CD4-positive, alpha-beta T cell (primary cell): ENCODE measurements at regions of chr7 and their contacts with region 1.

Region 1: GRCh38 chr7:102390697-102391484 is 5.3 kb upstream of the PRKRIP1 start:
- DNase-seq: peak; percentile 55 to 82 (median 60)
- ATAC-seq: peak; percentile 64
- H3K4me3 ChIP-seq: no peak overlapping the region
- H3K4me3 Mint-ChIP-seq: no peak overlapping the region
- H3K27ac ChIP-seq: no peak overlapping the region
- H3K27ac Mint-ChIP-seq: no peak overlapping the region
- H3K4me1 ChIP-seq: peaks cover 10% of the 10 kb centered on the region
- H3K4me1 Mint-ChIP-seq: peaks cover 6% of the 10 kb centered on the region
- H3K27me3 ChIP-seq: no peaks in the 10 kb centered on the region
- H3K27me3 Mint-ChIP-seq: no peaks in the 10 kb centered on the region
- CTCF ChIP-seq: peak; percentile 86

Region 2: DNA sequence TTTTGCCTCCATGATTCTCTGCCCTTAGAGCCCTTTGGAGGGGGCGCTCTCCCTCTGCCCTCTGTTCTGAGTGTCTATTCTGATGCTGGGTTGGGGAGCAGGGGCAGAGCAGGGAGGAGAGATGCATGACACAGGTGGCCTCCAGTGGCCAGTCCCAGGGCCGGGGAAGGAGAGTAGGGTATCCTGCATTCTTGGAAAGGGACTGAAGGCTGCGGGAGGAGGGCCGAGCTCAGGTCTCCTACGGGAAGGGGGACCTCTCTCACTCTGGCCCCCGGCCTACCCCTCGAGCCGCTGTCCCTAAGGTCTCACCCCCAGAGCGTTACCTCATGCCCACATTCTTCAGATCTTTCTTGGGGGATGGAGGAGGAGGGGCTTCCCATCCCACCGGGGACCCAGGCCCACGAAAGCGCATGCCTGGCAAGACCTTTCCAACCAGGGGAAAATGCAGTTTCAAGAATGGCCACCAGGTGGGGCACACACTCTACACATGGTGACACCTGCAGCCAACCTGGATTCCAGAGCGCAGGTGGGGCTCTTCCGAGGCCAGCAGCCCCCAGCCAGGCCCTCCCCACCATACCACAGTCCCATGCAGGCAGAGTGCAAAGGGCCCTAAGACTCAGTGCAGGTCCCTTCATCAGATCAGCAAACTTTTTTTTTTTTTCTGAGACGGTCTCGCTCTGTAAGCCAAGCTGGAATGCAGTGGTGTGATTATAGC is 848.2 kb before region 1 on chr7:
- CTCF ChIA-PET with region 1: no interaction called
- POLR2A ChIA-PET with region 1: no interaction called
- intact Hi-C with region 1: loop called (anchors 2 to 5 kb)
- DNase-seq: peak; percentile 61 to 81 (median 72)
- ATAC-seq: peak; percentile 49
- H3K4me3 ChIP-seq: no peak overlapping the region
- H3K4me3 Mint-ChIP-seq: no peak overlapping the region
- H3K27ac ChIP-seq: no peak overlapping the region
- H3K27ac Mint-ChIP-seq: no peak overlapping the region
- H3K4me1 ChIP-seq: peaks cover 4% of the 10 kb centered on the region
- H3K4me1 Mint-ChIP-seq: no peaks in the 10 kb centered on the region
- H3K27me3 ChIP-seq: peaks cover 0 to 3% of the 10 kb centered on the region in 2 experiments
- H3K27me3 Mint-ChIP-seq: peaks cover 4% of the 10 kb centered on the region
- CTCF ChIP-seq: peak; percentile 88

Region 3: GRCh38 chr7:102279537-102280400 is 111.1 kb before region 1 on chr7:
- CTCF ChIA-PET with region 1: interaction called, 5 read pairs
- POLR2A ChIA-PET with region 1: no interaction called
- intact Hi-C with region 1: loop called (anchors 1 kb)
- DNase-seq: peak in 13 of 14 experiments; percentile 37 to 82 (median 51)
- ATAC-seq: peak; percentile 89
- H3K4me3 ChIP-seq: no peak overlapping the region
- H3K4me3 Mint-ChIP-seq: no peak overlapping the region
- H3K27ac ChIP-seq: no peak overlapping the region
- H3K27ac Mint-ChIP-seq: no peak overlapping the region
- H3K4me1 ChIP-seq: peaks cover 14% of the 10 kb centered on the region
- H3K4me1 Mint-ChIP-seq: peaks cover 6% of the 10 kb centered on the region
- H3K27me3 ChIP-seq: no peaks in the 10 kb centered on the region
- H3K27me3 Mint-ChIP-seq: no peaks in the 10 kb centered on the region
- CTCF ChIP-seq: peak; percentile 81

Region 4: GRCh38 chr7:103094102-103094501 is 703.2 kb after region 1 on chr7:
- CTCF ChIA-PET with region 1: no interaction called
- POLR2A ChIA-PET with region 1: no interaction called
- intact Hi-C with region 1: no loop called
- DNase-seq: no peak
- ATAC-seq: no peak
- H3K4me3 ChIP-seq: no peak overlapping the region
- H3K4me3 Mint-ChIP-seq: no peak overlapping the region
- H3K27ac ChIP-seq: no peak overlapping the region
- H3K27ac Mint-ChIP-seq: no peak overlapping the region
- H3K4me1 ChIP-seq: no peaks in the 10 kb centered on the region
- H3K4me1 Mint-ChIP-seq: no peaks in the 10 kb centered on the region
- H3K27me3 ChIP-seq: no peaks in the 10 kb centered on the region
- H3K27me3 Mint-ChIP-seq: no peaks in the 10 kb centered on the region
- CTCF ChIP-seq: no peak